ENCODE measurements at regions of chr1 and their contacts with region 1.

Region 1: DNA sequence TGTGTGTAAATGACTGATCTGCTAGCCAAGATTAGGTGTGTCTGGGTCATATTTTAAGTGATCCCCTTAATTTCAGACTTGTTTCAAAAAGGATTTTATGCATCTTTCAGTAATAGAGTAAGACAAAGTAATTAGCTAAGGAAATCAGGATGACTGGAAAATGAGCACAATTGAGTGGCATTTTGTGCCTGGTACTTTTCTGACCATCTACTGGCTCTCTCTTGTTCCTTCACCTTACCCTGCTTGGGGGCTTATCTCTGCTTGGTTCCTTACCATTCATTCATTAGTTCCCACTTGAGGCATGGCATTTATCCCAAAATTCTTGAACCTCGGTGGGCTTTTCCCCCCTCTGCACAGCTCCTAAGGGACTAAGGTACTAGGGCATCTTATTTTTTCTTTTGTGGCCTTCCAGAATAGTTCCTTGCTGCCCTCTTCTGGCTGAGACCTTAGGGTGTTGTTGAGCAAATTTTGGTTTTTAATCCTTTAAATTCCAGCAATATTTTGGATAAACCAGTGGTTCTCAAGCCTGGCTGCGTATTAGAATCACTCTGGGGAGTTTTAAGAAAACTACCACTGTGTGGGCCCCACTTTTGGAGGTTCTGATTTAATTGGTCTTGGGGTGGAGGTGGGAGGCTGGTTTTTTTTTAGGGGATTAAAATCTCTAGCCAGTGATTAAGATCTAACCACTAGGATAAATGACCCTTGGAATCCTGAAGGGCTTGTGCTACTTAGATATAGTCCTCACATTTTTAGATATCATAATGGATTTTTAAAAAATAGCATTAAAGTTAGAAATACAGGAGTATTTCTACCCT is 50.8 kb downstream of the HS2ST1 start:
- DNase-seq: peak; percentile 56
- H3K4me3 ChIP-seq: no peak overlapping the region
- H3K27ac ChIP-seq: no peak overlapping the region
- H3K4me1 ChIP-seq: no peaks in the 10 kb centered on the region
- H3K27me3 ChIP-seq: no peaks in the 10 kb centered on the region
- CTCF ChIP-seq: peak; percentile 61 to 63
- POLR2A ChIP-seq: no peak

Region 2: GRCh38 chr1:86774305-86775295 is 190.6 kb before region 1 on chr1:
- CTCF ChIA-PET with region 1: interaction called, 12 read pairs
- POLR2A ChIA-PET with region 1: no interaction called
- dilution Hi-C with region 1: no loop called
- intact Hi-C with region 1: no loop called
- DNase-seq: peak; percentile 85
- H3K4me3 ChIP-seq: peak overlapping the region in 1 of 3 experiments; percentile 50
- H3K27ac ChIP-seq: peak overlapping the region; percentile 81
- H3K4me1 ChIP-seq: peaks cover 42% of the 10 kb centered on the region
- H3K27me3 ChIP-seq: no peaks in the 10 kb centered on the region
- CTCF ChIP-seq: no peak
- POLR2A ChIP-seq: no peak

Region 3: GRCh38 chr1:86782482-86782881 is 182.7 kb before region 1 on chr1:
- CTCF ChIA-PET with region 1: interaction called, 40 read pairs
- POLR2A ChIA-PET with region 1: no interaction called
- dilution Hi-C with region 1: no loop called
- intact Hi-C with region 1: loop called (anchors 1 kb)
- DNase-seq: no peak
- H3K4me3 ChIP-seq: no peak overlapping the region
- H3K27ac ChIP-seq: no peak overlapping the region
- H3K4me1 ChIP-seq: peaks cover 23% of the 10 kb centered on the region
- H3K27me3 ChIP-seq: no peaks in the 10 kb centered on the region
- CTCF ChIP-seq: no peak
- POLR2A ChIP-seq: no peak

Region 4: GRCh38 chr1:86833461-86834215 is 131.6 kb before region 1 on chr1:
- CTCF ChIA-PET with region 1: interaction called, 99 read pairs
- POLR2A ChIA-PET with region 1: interaction called, 3 read pairs
- dilution Hi-C with region 1: no loop called
- intact Hi-C with region 1: loop called (anchors 1 kb)
- DNase-seq: peak; percentile 75
- H3K4me3 ChIP-seq: no peak overlapping the region
- H3K27ac ChIP-seq: no peak overlapping the region
- H3K4me1 ChIP-seq: no peaks in the 10 kb centered on the region
- H3K27me3 ChIP-seq: no peaks in the 10 kb centered on the region
- CTCF ChIP-seq: peak; percentile 51 to 52
- POLR2A ChIP-seq: no peak

Region 5: GRCh38 chr1:86846166-86846647 is 119.0 kb before region 1 on chr1:
- CTCF ChIA-PET with region 1: interaction called, 10 read pairs
- POLR2A ChIA-PET with region 1: no interaction called
- dilution Hi-C with region 1: no loop called
- intact Hi-C with region 1: no loop called
- DNase-seq: peak; percentile 45
- H3K4me3 ChIP-seq: no peak overlapping the region
- H3K27ac ChIP-seq: no peak overlapping the region
- H3K4me1 ChIP-seq: no peaks in the 10 kb centered on the region
- H3K27me3 ChIP-seq: no peaks in the 10 kb centered on the region
- CTCF ChIP-seq: no peak
- POLR2A ChIP-seq: no peak

Region 6: GRCh38 chr1:86975993-86976550 is 10.9 kb after region 1 on chr1:
- CTCF ChIA-PET with region 1: interaction called, 39 read pairs
- POLR2A ChIA-PET with region 1: no interaction called
- dilution Hi-C with region 1: no loop called
- intact Hi-C with region 1: no loop called
- DNase-seq: no peak
- H3K4me3 ChIP-seq: no peak overlapping the region
- H3K27ac ChIP-seq: no peak overlapping the region
- H3K4me1 ChIP-seq: no peaks in the 10 kb centered on the region
- H3K27me3 ChIP-seq: no peaks in the 10 kb centered on the region
- CTCF ChIP-seq: no peak
- POLR2A ChIP-seq: no peak

Region 7: GRCh38 chr1:86998727-86999126 is 33.5 kb after region 1 on chr1:
- CTCF ChIA-PET with region 1: interaction called, 10 read pairs
- POLR2A ChIA-PET with region 1: no interaction called
- dilution Hi-C with region 1: no loop called
- intact Hi-C with region 1: no loop called
- DNase-seq: no peak
- H3K4me3 ChIP-seq: no peak overlapping the region
- H3K27ac ChIP-seq: no peak overlapping the region
- H3K4me1 ChIP-seq: no peaks in the 10 kb centered on the region
- H3K27me3 ChIP-seq: no peaks in the 10 kb centered on the region
- CTCF ChIP-seq: no peak
- POLR2A ChIP-seq: no peak

Region 8: GRCh38 chr1:87226341-87226760 is 261.1 kb after region 1 on chr1:
- CTCF ChIA-PET with region 1: no interaction called
- POLR2A ChIA-PET with region 1: no interaction called
- dilution Hi-C with region 1: no loop called
- intact Hi-C with region 1: no loop called
- DNase-seq: peak; percentile 93
- H3K4me3 ChIP-seq: no peak overlapping the region
- H3K27ac ChIP-seq: peak overlapping the region; percentile 92
- H3K4me1 ChIP-seq: peaks cover 17% of the 10 kb centered on the region
- H3K27me3 ChIP-seq: no peaks in the 10 kb centered on the region
- CTCF ChIP-seq: no peak
- POLR2A ChIP-seq: no peak